AG04449 (cell line): ENCODE measurements at regions of chr12 and their contacts with region 1.

Region 1: DNA sequence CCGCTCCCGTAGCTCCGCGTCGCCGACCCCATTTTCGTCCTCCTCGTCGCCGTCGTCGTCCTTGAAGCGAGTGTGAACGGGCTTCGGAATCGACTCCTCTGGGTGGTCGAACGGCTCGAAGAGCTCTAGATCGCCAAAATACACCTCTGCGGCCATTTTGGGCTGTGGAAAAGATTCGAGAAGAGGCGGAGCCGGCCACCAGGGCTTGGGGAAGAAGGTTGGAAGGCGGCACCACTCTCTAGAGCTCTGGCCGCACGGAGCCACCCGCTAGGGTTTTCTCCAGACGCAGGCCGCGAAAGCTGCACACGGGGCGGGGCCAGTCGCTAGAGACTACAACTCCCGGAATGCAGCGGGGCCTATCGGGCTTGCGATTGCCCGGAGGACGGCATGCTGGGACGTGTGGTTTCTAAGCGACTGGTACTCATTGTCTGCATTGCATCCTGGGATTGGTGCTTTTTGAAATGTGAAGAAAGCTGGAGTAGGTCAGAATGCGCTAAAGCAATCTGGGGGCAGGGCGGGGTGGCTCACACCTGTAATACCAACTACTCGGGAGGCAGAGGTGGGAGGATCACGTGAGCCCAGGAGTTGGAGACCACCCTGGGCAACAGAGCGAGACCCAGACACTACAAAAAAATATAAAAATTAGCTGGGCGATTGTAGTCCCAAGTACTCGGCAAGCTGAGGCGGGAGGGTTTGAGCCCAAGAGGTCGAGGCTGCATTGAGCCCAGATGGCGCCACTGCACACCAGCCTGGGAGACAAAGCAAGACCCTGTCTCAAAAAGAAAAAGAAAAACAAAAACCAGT is at the start of gene ZCCHC8:
- DNase-seq: peak; percentile 91
- H3K4me3 ChIP-seq: peak within 1 kb of the TSS; percentile 89
- CTCF ChIP-seq: no peak

Region 2: DNA sequence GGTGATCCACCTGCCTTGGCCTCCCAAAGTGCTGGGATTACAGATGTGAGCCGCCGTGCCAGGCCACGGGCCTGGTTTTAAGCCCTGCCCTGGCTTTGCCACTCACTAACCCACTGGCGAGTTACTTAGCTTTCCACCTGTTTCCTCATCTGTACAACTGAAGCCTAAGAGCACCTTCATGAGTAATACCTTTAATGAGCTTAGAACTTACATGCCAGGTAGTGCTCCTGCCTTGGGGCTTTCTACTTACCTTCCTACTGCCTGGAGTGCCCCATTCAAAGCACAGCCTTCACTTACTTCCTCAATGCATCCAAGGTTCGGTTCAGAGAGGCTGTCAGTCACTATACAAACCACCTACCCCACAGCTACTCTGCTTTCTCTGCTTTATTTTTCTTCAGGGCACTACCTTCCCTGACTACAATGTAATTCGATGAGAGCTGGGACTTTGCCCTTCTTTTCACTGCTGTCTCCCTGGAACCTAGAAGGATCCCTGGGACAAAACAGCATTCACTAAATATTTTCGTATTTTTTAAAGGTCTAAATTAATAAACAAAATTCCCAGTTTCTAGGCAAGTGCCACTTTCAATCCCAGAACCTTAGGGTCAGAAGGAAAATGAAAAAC is 14.0 kb before region 1 on chr12:
- CTCF ChIA-PET with region 1: interaction called, 10 read pairs
- POLR2A ChIA-PET with region 1: interaction called, 3 read pairs
- DNase-seq: no peak
- H3K4me3 ChIP-seq: no peak overlapping the region
- CTCF ChIP-seq: no peak

Region 3: DNA sequence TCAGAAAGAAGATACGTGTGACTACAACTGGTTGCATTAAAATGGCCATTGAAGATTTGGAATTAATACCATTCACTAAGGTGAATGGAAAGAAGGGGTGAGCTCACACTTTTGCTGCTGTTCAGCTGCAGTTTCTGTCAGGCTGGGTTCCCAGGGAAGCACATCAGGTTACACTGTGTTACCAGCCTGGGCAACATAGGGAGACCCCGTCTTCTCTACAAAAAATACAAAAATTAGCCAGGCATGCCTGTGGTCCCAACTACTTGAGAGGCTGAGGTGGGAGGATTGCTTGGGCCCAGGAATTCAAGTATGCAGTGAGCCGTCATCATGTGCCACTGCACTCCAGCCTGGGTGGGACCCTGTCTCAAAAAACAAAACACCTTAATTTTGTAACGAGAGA is 12.8 kb after region 1 on chr12:
- CTCF ChIA-PET with region 1: interaction called, 10 read pairs
- POLR2A ChIA-PET with region 1: interaction called, 8 read pairs
- DNase-seq: no peak
- H3K4me3 ChIP-seq: no peak overlapping the region
- CTCF ChIP-seq: no peak

Region 4: GRCh38 chr12:122526683-122527477 is 26.0 kb after region 1 on chr12 and contains the starts of genes KNTC1 and RSRC2:
- CTCF ChIA-PET with region 1: interaction called, 4 read pairs
- POLR2A ChIA-PET with region 1: interaction called, 16 read pairs
- DNase-seq: peak; percentile 98
- H3K4me3 ChIP-seq: peak within 1 kb of the TSS; percentile 86
- CTCF ChIP-seq: no peak